Activated CD4-positive, alpha-beta memory T cell treated with anti-CD3 and anti-CD28 coated beads for 36 hours (primary cell): ENCODE measurements at regions of chr1 and their contacts with region 1.

Region 1: DNA sequence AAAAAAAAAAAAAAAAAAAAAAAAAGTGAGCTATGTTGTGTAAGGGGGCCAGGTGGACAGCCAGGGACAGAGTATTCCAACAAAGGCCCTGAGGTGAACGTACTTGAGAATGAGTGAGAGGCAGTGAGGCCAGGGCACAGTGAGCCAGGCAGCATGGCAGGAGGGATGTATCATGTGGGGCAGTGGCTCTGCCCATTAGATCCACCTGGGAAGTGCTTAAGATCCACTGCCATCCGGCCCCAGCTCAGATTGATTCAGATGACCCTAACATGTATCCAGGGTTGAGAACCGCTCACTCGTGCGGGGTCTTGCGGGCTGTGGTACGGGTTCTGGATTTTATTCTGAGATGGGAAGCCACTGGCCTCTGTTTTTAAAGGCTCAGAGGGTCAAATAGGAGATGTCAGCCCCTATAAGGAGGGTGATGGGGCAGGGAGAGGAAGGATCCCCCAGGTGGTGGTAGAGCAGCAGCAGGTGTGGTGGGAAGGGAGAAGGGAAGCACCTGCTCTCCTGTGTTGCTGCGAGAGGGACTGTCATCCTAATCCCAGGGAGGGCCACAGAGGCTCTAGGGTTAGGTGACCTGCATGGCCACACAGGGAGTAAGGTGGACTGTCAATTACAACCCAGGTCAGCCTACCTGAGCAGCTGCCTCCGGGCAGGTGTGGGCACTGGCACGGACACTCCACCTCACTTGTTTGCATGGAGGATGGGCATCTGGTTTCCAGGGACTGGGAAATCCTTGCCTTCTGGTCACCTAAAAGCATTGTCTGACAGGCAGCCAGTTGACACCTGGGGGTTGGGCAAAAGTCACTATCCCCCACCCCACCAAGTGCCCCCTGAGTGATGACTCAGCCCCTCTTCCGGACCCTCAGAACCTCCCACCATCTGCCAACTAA is 31.6 kb downstream of the CDK18 start:
- DNase-seq: peak; percentile 7
- H3K4me3 Mint-ChIP-seq: no peak overlapping the region
- H3K27ac Mint-ChIP-seq: no peak overlapping the region
- H3K4me1 Mint-ChIP-seq: peaks cover 8% of the 10 kb centered on the region
- H3K27me3 Mint-ChIP-seq: peaks cover 10% of the 10 kb centered on the region

Region 2: GRCh38 chr1:205375835-205376545 is 160.1 kb before region 1 on chr1:
- CTCF ChIA-PET with region 1: no interaction called
- POLR2A ChIA-PET with region 1: no interaction called
- intact Hi-C with region 1: no loop called
- DNase-seq: no peak
- H3K4me3 Mint-ChIP-seq: no peak overlapping the region
- H3K27ac Mint-ChIP-seq: no peak overlapping the region
- H3K4me1 Mint-ChIP-seq: peaks cover 21% of the 10 kb centered on the region
- H3K27me3 Mint-ChIP-seq: peaks cover 3% of the 10 kb centered on the region

Region 3: DNA sequence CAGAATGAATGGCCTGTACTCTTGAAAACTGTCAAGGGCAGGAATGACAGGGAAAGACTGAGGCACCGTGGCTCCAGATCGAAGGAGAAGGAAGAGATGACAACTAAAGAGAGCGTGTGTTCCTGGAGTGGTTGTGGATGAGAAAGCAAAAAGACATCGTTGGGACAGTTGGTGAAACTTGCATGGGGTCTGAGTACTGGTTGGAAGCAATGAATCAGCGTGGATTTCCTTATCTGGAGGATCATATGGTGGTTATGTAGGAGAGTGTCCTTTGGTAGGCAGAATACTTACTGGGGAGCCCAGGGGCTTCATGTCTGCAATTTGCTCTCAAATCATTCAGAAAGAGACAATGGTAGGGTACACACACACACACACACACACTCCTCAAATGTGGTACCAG is 128.1 kb before region 1 on chr1:
- CTCF ChIA-PET with region 1: no interaction called
- POLR2A ChIA-PET with region 1: no interaction called
- intact Hi-C with region 1: no loop called
- DNase-seq: no peak
- H3K4me3 Mint-ChIP-seq: no peak overlapping the region
- H3K27ac Mint-ChIP-seq: no peak overlapping the region
- H3K4me1 Mint-ChIP-seq: peaks cover 15% of the 10 kb centered on the region
- H3K27me3 Mint-ChIP-seq: no peaks in the 10 kb centered on the region

Region 4: DNA sequence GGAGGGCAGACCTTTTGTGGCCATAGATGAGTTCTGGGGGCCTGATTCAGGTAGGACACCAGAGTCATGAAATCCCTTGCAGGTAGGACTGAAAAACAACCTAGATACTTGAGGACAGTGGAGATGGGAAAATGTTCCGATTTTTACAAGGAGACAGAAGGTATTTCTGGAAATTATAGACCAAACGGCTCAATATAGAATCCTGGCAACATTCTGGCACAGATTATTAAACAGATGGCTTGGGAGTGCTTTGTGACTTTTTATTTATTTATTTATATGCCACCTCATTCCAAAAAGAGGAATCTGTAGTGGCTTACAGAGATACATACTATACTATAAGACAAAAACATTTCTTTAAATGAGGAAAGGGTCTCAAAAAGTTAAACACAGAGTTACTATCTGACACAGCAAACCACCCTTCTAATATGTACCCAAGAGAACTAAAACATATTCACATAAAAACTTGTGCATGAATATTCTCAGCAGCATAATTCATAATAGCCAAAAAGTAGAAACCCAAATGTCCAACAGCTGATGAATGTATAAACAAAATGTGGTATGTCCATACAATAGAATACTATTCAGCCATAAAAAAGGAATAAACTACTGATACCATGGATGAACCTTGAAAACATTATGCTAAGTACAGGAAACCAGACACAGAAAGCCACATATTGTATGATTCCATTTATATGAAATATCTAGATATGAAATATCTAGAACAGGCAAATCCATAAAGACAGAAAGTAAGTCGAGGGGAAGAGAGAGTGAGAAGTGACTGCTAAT is 18.1 kb after region 1 on chr1:
- CTCF ChIA-PET with region 1: no interaction called
- POLR2A ChIA-PET with region 1: no interaction called
- intact Hi-C with region 1: no loop called
- DNase-seq: no peak
- H3K4me3 Mint-ChIP-seq: no peak overlapping the region
- H3K27ac Mint-ChIP-seq: no peak overlapping the region
- H3K4me1 Mint-ChIP-seq: no peaks in the 10 kb centered on the region
- H3K27me3 Mint-ChIP-seq: peaks cover 42% of the 10 kb centered on the region

Region 5: DNA sequence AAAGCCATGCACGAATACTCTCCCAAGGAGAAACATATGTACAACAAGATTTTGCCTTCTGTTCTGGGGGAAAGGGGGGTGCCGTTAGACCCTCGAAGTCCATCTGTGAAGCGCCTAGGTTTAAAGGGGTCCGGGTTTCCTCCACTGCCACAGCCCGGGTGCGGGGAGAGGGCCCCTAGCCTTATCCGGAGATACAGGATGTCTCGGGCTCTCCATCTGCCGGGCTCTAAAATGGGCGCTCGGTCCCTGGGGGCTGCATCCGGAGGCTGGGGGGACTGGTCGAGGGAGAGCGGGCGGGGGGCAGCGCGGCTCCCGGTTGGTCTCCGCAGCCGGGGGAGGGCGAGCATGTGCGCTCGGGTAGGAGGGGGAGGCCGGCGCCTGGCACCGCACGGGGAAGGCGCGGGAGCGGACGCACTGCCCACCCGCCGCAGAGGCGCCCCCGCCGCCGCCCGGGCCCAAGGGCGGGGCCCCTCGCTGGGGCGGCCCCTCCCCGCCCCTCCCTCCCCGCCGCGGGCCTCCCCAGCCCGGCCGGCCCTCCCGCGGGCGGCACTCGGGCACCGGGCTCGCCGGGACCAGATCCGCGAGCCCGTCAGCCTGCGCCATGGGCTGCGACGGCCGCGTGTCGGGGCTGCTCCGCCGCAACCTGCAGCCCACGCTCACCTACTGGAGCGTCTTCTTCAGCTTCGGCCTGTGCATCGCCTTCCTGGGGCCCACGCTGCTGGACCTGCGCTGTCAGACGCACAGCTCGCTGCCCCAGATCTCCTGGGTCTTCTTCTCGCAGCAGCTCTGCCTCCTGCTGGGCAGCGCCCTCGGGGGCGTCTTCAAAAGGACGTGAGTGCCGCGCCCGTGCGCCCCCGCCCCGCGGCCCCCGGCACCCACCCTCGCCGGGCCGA is 32.6 kb after region 1 on chr1:
- CTCF ChIA-PET with region 1: interaction called, 3 read pairs
- POLR2A ChIA-PET with region 1: no interaction called
- intact Hi-C with region 1: loop called (anchors 5 kb)
- DNase-seq: no peak
- H3K4me3 Mint-ChIP-seq: no peak overlapping the region
- H3K27ac Mint-ChIP-seq: no peak overlapping the region
- H3K4me1 Mint-ChIP-seq: peaks cover 3% of the 10 kb centered on the region
- H3K27me3 Mint-ChIP-seq: peaks cover 23% of the 10 kb centered on the region

Region 6: DNA sequence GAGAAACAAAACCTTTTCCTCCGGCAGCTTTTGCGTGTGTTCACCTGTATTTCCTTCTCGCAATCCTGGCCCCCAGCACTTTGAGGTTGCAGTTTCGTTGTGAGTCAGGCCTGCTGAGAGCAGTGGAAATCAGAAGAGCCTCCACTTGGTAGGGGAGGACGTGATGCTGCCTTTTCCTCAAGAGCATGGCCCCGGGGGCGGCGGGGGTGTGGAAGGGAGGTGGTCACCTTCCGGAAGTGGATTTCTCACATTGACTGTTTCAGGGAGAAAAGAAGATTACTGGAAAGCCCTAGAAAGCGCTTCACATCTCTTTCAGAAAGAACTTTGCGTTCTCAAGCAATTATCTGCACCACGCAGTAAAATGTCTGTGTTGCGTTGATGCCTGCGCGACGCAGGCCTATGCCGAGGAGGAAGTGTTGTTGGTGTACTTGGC is 1248.4 kb after region 1 on chr1:
- CTCF ChIA-PET with region 1: no interaction called
- POLR2A ChIA-PET with region 1: no interaction called
- intact Hi-C with region 1: no loop called
- DNase-seq: peak; percentile 96
- H3K4me3 Mint-ChIP-seq: peak overlapping the region; percentile 38
- H3K27ac Mint-ChIP-seq: peak overlapping the region; percentile 82
- H3K4me1 Mint-ChIP-seq: peaks cover 59% of the 10 kb centered on the region
- H3K27me3 Mint-ChIP-seq: peaks cover 22% of the 10 kb centered on the region